ENCODE measurements at regions of chr4 and their contacts with region 1.

Region 1: DNA sequence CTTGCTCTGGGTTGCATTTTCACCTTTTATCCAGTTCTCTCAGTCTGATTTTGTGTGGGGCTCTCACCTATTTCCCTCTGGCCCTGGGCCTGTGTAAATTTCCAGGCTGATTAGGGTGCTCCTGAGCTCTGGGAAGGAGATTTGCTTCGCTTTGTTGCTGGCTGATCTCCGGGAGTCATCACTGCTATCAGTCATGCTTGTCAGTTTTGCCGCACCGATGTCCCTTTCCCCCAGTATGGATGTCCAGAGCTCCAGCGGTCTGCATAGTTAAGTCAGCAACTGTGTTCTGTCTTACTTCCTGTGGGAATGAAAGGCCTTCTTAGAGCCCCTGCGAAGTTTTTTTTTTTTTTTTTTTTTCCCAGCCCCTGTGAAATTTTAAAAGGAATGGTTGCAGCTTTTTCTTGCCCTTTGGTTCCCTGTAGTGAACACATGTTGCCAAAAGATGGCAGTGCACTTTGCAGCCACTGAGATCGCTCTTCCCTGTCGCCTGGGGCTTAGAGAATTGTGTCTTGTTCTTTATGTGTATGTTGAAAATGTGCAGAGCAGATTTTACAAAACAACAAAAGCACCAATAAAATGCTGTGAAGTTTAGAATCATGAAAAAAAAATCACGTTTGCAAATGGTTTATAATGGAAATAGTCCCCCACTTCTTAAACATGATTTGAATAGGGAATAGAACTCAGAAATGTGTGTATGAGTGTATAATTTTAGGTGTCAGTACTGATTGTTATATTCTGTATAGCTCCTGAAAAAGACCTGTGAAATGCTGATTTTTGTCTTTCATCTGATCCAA is 109.1 kb upstream of the SLC4A4 start:
- DNase-seq: no peak
- H3K4me3 ChIP-seq: no peak overlapping the region
- H3K27ac ChIP-seq: no peak overlapping the region
- H3K27me3 ChIP-seq: no peaks in the 10 kb centered on the region
- CTCF ChIP-seq: peak; percentile 86

Region 2: GRCh38 chr4:71195924-71196323 is 33.8 kb before region 1 on chr4:
- CTCF ChIA-PET with region 1: interaction called, 28 read pairs
- POLR2A ChIA-PET with region 1: no interaction called
- DNase-seq: peak; percentile 52
- H3K4me3 ChIP-seq: no peak overlapping the region
- H3K27ac ChIP-seq: no peak overlapping the region
- H3K27me3 ChIP-seq: no peaks in the 10 kb centered on the region
- CTCF ChIP-seq: no peak

Region 3: GRCh38 chr4:71217688-71218087 is 12.0 kb before region 1 on chr4:
- CTCF ChIA-PET with region 1: interaction called, 11 read pairs
- POLR2A ChIA-PET with region 1: no interaction called
- DNase-seq: no peak
- H3K4me3 ChIP-seq: no peak overlapping the region
- H3K27ac ChIP-seq: no peak overlapping the region
- H3K27me3 ChIP-seq: no peaks in the 10 kb centered on the region
- CTCF ChIP-seq: no peak

Region 4: GRCh38 chr4:71270901-71271300 is 41.2 kb after region 1 on chr4:
- CTCF ChIA-PET with region 1: interaction called, 16 read pairs
- POLR2A ChIA-PET with region 1: interaction called, 6 read pairs
- DNase-seq: no peak
- H3K4me3 ChIP-seq: no peak overlapping the region
- H3K27ac ChIP-seq: no peak overlapping the region
- H3K27me3 ChIP-seq: no peaks in the 10 kb centered on the region
- CTCF ChIP-seq: peak; percentile 50

Region 5: GRCh38 chr4:71553605-71554004 is 323.9 kb after region 1 on chr4:
- CTCF ChIA-PET with region 1: interaction called, 10 read pairs
- POLR2A ChIA-PET with region 1: no interaction called
- DNase-seq: no peak
- H3K4me3 ChIP-seq: no peak overlapping the region
- H3K27ac ChIP-seq: no peak overlapping the region
- H3K27me3 ChIP-seq: no peaks in the 10 kb centered on the region
- CTCF ChIP-seq: peak; percentile 68